ENCODE measurements at regions of chr19 and their contacts with region 1.

Region 1: GRCh38 chr19:49929611-49930482 is 543 bp upstream of the NUP62 start:
- DNase-seq: peak; percentile 96

Region 2: DNA sequence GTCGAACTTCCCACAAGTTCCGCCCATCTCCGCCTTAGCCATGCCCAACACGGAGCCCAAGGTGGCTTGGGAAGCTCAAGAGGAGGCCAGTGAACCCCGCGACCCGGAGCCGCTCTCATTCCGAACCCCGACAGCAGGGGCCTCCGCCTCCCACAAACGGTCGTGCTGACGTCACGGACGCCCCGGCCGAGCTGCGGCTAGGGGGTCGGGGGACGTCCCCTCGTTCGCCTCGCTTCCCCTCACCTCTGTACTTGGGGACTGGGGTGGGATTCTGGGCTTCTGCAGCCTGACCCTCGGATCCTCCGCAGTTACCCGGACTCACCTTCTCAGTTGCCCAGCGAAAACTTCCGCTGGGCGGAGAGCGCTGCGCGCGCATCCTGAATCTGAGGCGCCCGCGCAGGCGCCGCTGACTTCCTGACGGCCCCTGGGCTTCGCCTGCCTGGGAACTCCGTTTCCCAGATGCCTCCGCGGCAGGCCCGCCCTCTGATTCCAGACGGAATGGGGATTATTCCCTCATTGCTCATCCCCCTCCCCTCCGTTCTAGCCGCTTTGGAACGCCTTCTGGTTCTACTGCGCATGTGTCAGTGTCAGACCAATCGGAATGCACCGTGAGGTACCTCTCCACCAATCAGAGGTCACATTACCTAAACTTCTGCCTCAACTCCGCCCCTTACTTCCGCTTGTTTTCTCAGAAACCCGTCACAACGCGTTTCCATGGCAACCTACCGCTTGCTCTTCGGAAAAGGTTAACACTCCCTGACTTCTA is 95.4 kb after region 1 on chr19 and contains the start of gene VRK3:
- intact Hi-C with region 1: loop called (anchors 1 kb)
- DNase-seq: peak; percentile 99
- total RNA-seq, gene VRK3: 22.1 TPM

Measured in cardiac septum (tissue), 1 donor.